ENCODE measurements at regions of chr1 and their contacts with region 1.

Region 1: GRCh38 chr1:27365372-27366112 is 1.2 kb downstream of the MAP3K6 start:
- DNase-seq: peak; percentile 93 to 97 (median 94)
- ATAC-seq: peak; percentile 84
- H3K4me3 ChIP-seq: peak overlapping the region; percentile 82
- H3K27ac ChIP-seq: peak overlapping the region; percentile 78
- H3K4me1 ChIP-seq: peaks cover 20 to 57% of the 10 kb centered on the region in 2 experiments; a peak in 4 of 5 replicates
- H3K27me3 ChIP-seq: no peaks in the 10 kb centered on the region
- CTCF ChIP-seq: no peak
- EP300 ChIP-seq: peak; percentile 56
- POLR2A ChIP-seq: peak; percentile 76
- RAD21 ChIP-seq: no peak

Region 2: GRCh38 chr1:27192039-27192529 is 173.5 kb before region 1 on chr1:
- CTCF ChIA-PET with region 1: no interaction called
- POLR2A ChIA-PET with region 1: no interaction called
- in situ Hi-C with region 1: no loop called
- intact Hi-C with region 1: loop called (anchors 10 kb)
- DNase-seq: peak in 3 of 4 experiments; percentile 20 to 56 (median 49)
- ATAC-seq: peak; percentile 59
- H3K4me3 ChIP-seq: no peak overlapping the region
- H3K27ac ChIP-seq: no peak overlapping the region
- H3K4me1 ChIP-seq: peaks cover 7 to 22% of the 10 kb centered on the region in 2 experiments
- H3K27me3 ChIP-seq: no peaks in the 10 kb centered on the region; a peak in 1 of 5 replicates
- CTCF ChIP-seq: no peak
- EP300 ChIP-seq: no peak
- POLR2A ChIP-seq: no peak
- RAD21 ChIP-seq: no peak

Region 3: GRCh38 chr1:27332536-27333281 is 32.8 kb before region 1 on chr1:
- CTCF ChIA-PET with region 1: interaction called, 4 read pairs
- POLR2A ChIA-PET with region 1: interaction called, 10 read pairs
- in situ Hi-C with region 1: no loop called
- intact Hi-C with region 1: no loop called
- DNase-seq: peak; percentile 76 to 85 (median 80)
- ATAC-seq: peak; percentile 95
- H3K4me3 ChIP-seq: no peak overlapping the region
- H3K27ac ChIP-seq: no peak overlapping the region; the same call in 2 of the 3 replicates
- H3K4me1 ChIP-seq: peaks cover 0 to 12% of the 10 kb centered on the region in 2 experiments; a peak in 2 of 5 replicates
- H3K27me3 ChIP-seq: no peaks in the 10 kb centered on the region
- CTCF ChIP-seq: peak; percentile 88 to 96 (median 90)
- EP300 ChIP-seq: no peak
- POLR2A ChIP-seq: no peak
- RAD21 ChIP-seq: peak; percentile 26 to 75; a peak in 3 of 4 replicates

Region 4: DNA sequence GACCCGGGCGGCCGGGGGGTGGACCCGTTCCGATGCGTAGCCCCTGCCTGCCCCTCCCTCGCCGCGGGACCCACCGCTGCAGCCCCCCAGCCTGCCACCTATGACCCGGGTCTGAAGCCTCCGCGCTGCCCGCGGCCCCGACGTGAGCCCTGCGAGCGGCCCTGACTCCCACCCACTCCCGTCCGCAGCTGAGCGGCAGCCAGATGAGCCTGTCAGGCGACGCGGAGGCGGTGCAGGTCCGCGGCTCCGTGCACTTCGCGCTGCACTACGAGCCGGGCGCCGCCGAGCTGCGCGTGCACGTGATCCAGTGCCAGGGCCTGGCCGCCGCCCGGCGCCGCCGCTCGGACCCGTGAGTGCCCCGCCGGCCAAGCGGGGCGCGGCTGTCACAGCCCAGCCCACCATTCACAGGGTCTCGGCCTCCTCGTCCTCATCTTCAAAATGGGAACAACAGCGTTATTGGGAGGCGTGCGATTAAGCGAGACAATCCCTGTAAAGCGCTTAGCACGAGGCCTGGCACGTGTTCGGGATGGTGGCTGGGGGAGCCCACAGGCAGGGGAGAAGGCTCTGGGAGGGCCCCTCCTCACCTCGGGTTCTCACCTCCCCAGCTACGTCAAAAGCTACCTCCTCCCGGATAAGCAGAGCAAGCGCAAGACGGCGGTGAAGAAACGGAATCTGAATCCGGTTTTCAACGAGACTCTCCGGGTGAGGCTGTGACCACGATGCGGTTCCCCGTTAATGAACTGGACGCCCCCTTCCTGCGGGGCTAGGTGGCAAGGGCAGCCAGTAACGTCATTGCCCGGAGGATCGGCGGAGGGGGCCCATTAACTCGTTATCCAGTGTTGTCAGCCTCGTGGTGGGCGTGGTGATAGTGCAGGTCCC is 15.5 kb before region 1 on chr1:
- CTCF ChIA-PET with region 1: interaction called, 5 read pairs
- POLR2A ChIA-PET with region 1: interaction called, 19 read pairs
- in situ Hi-C with region 1: no loop called
- intact Hi-C with region 1: no loop called
- DNase-seq: no peak
- ATAC-seq: peak; percentile 10
- H3K4me3 ChIP-seq: no peak overlapping the region
- H3K27ac ChIP-seq: no peak overlapping the region
- H3K4me1 ChIP-seq: peaks cover 15 to 52% of the 10 kb centered on the region in 2 experiments; a peak in 4 of 5 replicates
- H3K27me3 ChIP-seq: no peaks in the 10 kb centered on the region
- CTCF ChIP-seq: no peak
- EP300 ChIP-seq: no peak
- POLR2A ChIP-seq: no peak
- RAD21 ChIP-seq: no peak

Region 5: DNA sequence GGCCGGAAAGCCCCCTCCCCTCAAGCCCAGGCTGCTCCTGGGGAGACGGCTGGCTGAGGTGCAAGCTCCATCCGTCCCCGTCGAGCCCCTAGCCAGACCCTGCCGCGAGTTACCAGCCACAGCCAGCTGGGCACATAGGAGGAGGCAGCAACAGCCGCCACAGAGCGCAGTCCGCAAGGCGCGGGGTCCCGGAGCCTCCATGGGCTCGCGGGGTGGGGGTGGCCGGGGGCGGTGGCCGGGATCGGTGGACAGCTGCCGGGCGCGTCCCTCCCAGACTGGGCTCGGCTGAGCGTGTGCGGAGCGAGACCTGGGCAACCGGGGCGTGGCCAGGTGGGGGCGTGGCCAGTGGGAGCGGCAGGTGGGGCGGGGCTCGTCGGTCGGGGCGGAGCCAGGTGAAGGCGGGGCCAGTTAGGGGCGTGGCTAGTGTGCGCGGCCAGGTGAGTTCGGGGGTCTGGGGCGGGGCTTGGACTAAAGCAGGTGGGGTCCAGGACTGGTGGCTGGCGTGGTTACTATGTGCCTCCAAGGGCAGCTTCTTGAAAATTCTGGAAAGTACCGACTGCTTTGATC is 17.6 kb after region 1 on chr1 and contains the start of gene CD164L2:
- CTCF ChIA-PET with region 1: no interaction called
- POLR2A ChIA-PET with region 1: interaction called, 20 read pairs
- in situ Hi-C with region 1: no loop called
- intact Hi-C with region 1: no loop called
- DNase-seq: peak; percentile 85 to 99 (median 98)
- ATAC-seq: peak; percentile 99
- H3K4me3 ChIP-seq: peak within 1 kb of the TSS; percentile 32
- H3K27ac ChIP-seq: no peak within 1 kb of the TSS
- H3K4me1 ChIP-seq: peaks cover 5 to 33% of the 10 kb centered on the region in 2 experiments
- H3K27me3 ChIP-seq: no peaks in the 10 kb centered on the region
- CTCF ChIP-seq: no peak
- EP300 ChIP-seq: no peak
- POLR2A ChIP-seq: no peak
- RAD21 ChIP-seq: no peak
- polyA plus RNA-seq, gene CD164L2: 0.08 TPM in 1 of 2 experiments, not detected in the other

Measured in K562 (cell line).